ENCODE measurements at regions of chr15 and their contacts with region 1.

Region 1: DNA sequence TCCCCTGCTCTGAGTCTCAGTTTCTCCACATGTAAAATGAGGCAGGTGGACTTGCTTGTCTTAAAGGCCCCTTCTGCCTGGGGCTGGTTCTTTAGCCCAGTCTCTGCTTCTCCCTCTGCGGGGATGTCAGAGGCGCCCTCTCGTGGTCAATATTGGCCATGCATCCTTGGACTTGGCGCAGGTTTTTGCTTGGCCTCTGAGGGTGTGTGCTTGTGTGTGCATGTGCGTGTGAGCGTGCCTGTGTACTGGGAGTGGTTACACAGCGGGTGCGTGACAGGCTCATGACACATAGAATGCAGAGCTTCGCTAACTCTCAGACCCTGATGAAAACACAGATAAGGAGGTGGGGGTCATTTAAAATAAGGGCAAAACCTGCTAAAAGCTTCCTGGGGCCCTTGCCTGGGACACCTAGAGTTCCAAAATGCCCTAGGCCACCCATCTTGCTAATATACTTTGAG is 160.9 kb downstream of the SMAD6 start:
- DNase-seq: peak; percentile 72 to 80
- H3K4me3 ChIP-seq: no peak overlapping the region
- H3K27ac ChIP-seq: no peak overlapping the region
- H3K4me1 ChIP-seq: no peaks in the 10 kb centered on the region
- H3K27me3 ChIP-seq: no peaks in the 10 kb centered on the region
- CTCF ChIP-seq: peak; percentile 89

Region 2: GRCh38 chr15:66877477-66878271 is 14.8 kb after region 1 on chr15:
- CTCF ChIA-PET with region 1: interaction called, 27 read pairs
- POLR2A ChIA-PET with region 1: no interaction called
- intact Hi-C with region 1: loop called (anchors 2 kb)
- DNase-seq: no peak
- H3K4me3 ChIP-seq: no peak overlapping the region
- H3K27ac ChIP-seq: no peak overlapping the region
- H3K4me1 ChIP-seq: peaks cover 9% of the 10 kb centered on the region
- H3K27me3 ChIP-seq: no peaks in the 10 kb centered on the region
- CTCF ChIP-seq: no peak

Region 3: GRCh38 chr15:66901336-66902100 is 38.6 kb after region 1 on chr15:
- CTCF ChIA-PET with region 1: no interaction called
- POLR2A ChIA-PET with region 1: no interaction called
- intact Hi-C with region 1: loop called (anchors 2 kb)
- DNase-seq: no peak
- H3K4me3 ChIP-seq: no peak overlapping the region
- H3K27ac ChIP-seq: no peak overlapping the region
- H3K4me1 ChIP-seq: no peaks in the 10 kb centered on the region
- H3K27me3 ChIP-seq: no peaks in the 10 kb centered on the region
- CTCF ChIP-seq: no peak

Region 4: DNA sequence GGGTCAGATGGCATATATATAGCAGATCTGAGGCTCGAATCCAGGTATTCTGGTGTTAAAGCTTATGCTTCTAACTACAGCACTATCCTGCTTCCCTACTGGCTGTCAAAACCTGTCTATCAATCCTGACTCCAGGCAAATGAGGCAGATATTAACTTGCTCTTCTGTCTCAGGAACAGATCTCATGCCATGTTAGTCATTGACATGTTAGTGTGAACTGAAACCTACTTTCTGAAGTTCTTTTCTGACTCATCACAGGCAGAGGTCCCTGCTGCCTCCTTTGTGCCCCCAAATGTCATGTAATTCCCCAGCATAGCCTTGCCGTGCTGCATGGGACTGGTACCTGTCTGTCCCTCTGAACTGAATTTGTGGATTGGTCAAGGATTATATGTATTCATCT is 77.5 kb after region 1 on chr15:
- CTCF ChIA-PET with region 1: no interaction called
- POLR2A ChIA-PET with region 1: no interaction called
- intact Hi-C with region 1: no loop called
- DNase-seq: peak in 1 of 2 experiments; percentile 63
- H3K4me3 ChIP-seq: no peak overlapping the region
- H3K27ac ChIP-seq: no peak overlapping the region
- H3K4me1 ChIP-seq: no peaks in the 10 kb centered on the region; the same call in 1 of the 2 replicates
- H3K27me3 ChIP-seq: no peaks in the 10 kb centered on the region
- CTCF ChIP-seq: no peak

Region 5: GRCh38 chr15:67358812-67359211 is 495.9 kb after region 1 on chr15:
- CTCF ChIA-PET with region 1: interaction called, 11 read pairs
- POLR2A ChIA-PET with region 1: no interaction called
- intact Hi-C with region 1: no loop called
- DNase-seq: no peak
- H3K4me3 ChIP-seq: no peak overlapping the region
- H3K27ac ChIP-seq: no peak overlapping the region
- H3K4me1 ChIP-seq: no peaks in the 10 kb centered on the region
- H3K27me3 ChIP-seq: no peaks in the 10 kb centered on the region
- CTCF ChIP-seq: no peak

Region 6: GRCh38 chr15:68566377-68566954 is 1703.6 kb after region 1 on chr15:
- CTCF ChIA-PET with region 1: no interaction called
- POLR2A ChIA-PET with region 1: no interaction called
- intact Hi-C with region 1: no loop called
- DNase-seq: no peak
- H3K4me3 ChIP-seq: no peak overlapping the region
- H3K27ac ChIP-seq: no peak overlapping the region
- H3K4me1 ChIP-seq: no peaks in the 10 kb centered on the region
- H3K27me3 ChIP-seq: no peaks in the 10 kb centered on the region
- CTCF ChIP-seq: no peak